Activated CD4-positive, alpha-beta T cell treated with anti-CD3 and anti-CD28 coated beads for 36 hours (primary cell): ENCODE measurements at regions of chr3 and their contacts with region 1.

Region 1: DNA sequence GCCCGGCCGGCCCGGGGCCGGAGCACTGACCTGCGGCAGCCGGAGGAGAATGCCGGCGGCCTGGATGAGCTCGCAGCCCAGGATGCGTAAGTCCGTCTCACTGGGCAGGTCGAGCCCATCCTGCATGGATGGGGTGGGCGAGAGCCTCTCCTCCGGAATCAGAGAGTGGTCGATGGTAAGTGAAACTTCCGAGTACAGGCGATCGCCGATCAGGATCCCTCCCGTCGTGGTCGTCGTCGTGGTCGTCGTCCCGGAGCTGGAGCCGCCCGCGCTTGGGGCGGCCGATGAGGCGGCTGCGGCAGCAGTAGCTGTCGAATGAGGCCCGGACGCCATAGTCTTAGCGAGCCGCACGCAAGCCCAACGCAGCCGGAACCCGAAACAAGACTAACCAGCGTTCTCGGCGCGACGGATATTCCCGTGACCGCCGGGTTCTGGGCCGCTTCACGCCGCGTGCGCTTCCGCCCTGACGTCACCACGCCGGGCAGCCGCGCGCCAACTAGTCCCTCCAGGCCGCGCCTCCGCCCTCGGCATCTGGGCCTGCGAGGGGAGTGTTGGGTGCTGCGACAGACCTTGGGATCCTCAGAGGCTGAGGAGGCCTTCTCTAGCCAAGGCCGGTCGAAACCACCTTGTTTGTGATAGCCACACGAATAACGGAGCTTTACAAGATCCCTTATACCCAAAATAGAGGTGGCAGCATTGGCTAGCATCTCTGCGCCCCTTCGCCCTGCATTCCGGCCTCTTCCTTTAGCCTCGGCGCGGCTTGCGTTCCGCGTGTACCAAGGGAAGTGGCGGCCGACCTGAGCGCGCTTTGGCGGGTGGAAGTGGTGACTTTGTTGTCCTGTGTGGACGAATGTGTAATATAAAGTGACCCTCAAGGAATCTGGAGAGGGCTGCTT is at the start of gene CCNL1:
- DNase-seq: peak; percentile 97
- ATAC-seq: peak; percentile 79
- H3K4me3 Mint-ChIP-seq: peak within 1 kb of the TSS; percentile 84
- H3K27ac Mint-ChIP-seq: peak within 1 kb of the TSS; percentile 97
- H3K4me1 Mint-ChIP-seq: peaks cover 37% of the 10 kb centered on the region
- H3K27me3 Mint-ChIP-seq: no peaks in the 10 kb centered on the region
- total RNA-seq, gene CCNL1: 163 to 215 TPM

Region 2: DNA sequence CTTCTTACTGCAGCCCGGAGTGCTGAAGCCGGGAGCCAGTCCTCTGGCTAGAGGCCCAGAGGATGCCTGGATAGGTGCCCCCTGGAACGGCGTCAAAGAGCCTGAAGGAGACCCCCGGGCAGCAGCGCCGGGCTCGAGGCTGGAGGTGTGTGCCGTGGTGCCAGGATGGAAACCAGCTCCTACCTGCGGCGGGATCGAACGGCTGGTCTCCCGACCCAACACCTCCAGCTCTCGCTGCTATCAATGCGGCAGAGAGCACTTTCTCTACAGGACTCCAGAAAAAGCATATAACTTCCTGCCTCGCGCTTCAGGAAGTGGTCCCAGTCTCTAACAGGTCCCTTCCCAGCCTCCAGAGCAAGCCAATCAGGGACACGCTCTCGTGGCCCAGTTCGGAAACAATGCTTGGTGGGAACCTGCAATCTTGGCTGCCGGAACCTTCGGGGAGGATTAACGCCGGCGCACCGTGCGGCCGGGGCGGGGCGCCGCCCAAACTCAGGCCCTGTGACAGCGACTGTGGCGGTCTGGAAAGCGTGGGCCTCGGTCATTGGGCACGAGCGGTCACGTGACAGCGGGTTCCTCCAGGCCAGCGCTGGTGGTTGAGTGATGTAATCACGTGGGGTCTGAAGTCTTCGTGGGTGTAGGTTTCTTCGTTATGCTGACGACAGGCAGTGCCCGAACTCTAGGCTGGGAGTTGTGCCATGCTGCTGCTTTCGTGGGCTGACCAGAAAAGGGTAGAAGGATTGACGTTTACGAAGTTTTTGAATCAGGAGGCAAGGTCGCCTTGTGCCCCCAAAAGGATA is 1305.7 kb before region 1 on chr3 and contains the start of gene SLC33A1:
- CTCF ChIA-PET with region 1: no interaction called
- POLR2A ChIA-PET with region 1: no interaction called
- intact Hi-C with region 1: loop called (anchors 1 to 10 kb)
- DNase-seq: peak; percentile 99
- ATAC-seq: peak; percentile 94
- H3K4me3 Mint-ChIP-seq: peak within 1 kb of the TSS; percentile 99
- H3K27ac Mint-ChIP-seq: peak within 1 kb of the TSS; percentile 99
- H3K4me1 Mint-ChIP-seq: peaks cover 33% of the 10 kb centered on the region
- H3K27me3 Mint-ChIP-seq: no peaks in the 10 kb centered on the region
- total RNA-seq, gene SLC33A1: 19.2 to 19.9 TPM

Region 3: GRCh38 chr3:156554842-156555687 is 604.9 kb before region 1 on chr3 and contains the start of gene SSR3:
- CTCF ChIA-PET with region 1: no interaction called
- POLR2A ChIA-PET with region 1: interaction called, 4 read pairs
- intact Hi-C with region 1: loop called (anchors 1 kb)
- DNase-seq: peak; percentile 100
- ATAC-seq: peak; percentile 99
- H3K4me3 Mint-ChIP-seq: peak within 1 kb of the TSS; percentile 92
- H3K27ac Mint-ChIP-seq: peak within 1 kb of the TSS; percentile 93
- H3K4me1 Mint-ChIP-seq: peaks cover 47% of the 10 kb centered on the region
- H3K27me3 Mint-ChIP-seq: no peaks in the 10 kb centered on the region
- total RNA-seq, gene SSR3: 144 to 156 TPM

Region 4: GRCh38 chr3:157088601-157089454 is 71.2 kb before region 1 on chr3:
- CTCF ChIA-PET with region 1: interaction called, 3 read pairs
- POLR2A ChIA-PET with region 1: interaction called, 10 read pairs
- intact Hi-C with region 1: loop called (anchors 1 kb)
- DNase-seq: peak; percentile 97
- ATAC-seq: peak; percentile 79
- H3K4me3 Mint-ChIP-seq: peak overlapping the region; percentile 72
- H3K27ac Mint-ChIP-seq: peak overlapping the region; percentile 97
- H3K4me1 Mint-ChIP-seq: peaks cover 71% of the 10 kb centered on the region
- H3K27me3 Mint-ChIP-seq: peaks cover 1% of the 10 kb centered on the region

Region 5: DNA sequence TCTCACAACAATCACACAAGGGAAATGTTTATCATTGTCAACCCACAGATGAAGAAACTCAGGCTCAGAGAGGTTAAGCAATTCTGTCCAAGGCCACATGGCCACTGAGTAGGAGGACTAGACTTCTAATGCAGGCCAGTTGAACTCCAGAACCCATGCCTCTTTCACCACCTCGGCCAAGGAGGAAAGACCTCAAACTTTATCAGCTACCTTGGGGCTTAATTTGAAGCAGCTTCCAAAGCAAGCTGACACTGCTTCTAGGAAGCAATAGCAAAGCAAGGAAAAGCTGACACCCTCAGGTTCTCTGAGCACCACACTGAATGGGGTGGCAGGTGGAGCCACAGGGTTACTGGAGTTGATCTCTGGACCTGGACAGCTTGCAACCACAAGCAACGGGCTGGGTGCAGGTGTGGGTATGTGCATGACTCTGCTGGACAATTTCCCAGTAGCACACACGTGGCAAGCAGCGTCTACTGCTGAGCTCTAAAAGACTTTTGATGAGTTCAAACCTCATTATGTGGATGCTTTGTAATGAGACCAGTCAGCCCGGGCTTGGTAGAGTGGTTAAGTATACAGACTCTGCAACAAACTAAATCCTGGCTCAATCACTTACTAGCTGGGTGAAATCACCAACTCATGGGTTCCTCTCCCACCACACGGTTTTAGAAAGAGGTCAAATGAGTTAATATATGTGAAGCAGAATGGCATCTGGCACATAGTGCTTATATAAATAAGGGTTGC is 23.2 kb before region 1 on chr3:
- CTCF ChIA-PET with region 1: interaction called, 13 read pairs
- POLR2A ChIA-PET with region 1: no interaction called
- intact Hi-C with region 1: loop called in 1 of 2 experiments (anchors 2 kb)
- DNase-seq: no peak
- ATAC-seq: no peak
- H3K4me3 Mint-ChIP-seq: no peak overlapping the region
- H3K27ac Mint-ChIP-seq: peak overlapping the region; percentile 39
- H3K4me1 Mint-ChIP-seq: peaks cover 33% of the 10 kb centered on the region
- H3K27me3 Mint-ChIP-seq: no peaks in the 10 kb centered on the region

Region 6: GRCh38 chr3:157148196-157148889 is 11.7 kb before region 1 on chr3:
- CTCF ChIA-PET with region 1: interaction called, 6 read pairs
- POLR2A ChIA-PET with region 1: interaction called, 34 read pairs
- intact Hi-C with region 1: loop called (anchors 1 kb)
- DNase-seq: peak; percentile 43
- ATAC-seq: peak; percentile 74
- H3K4me3 Mint-ChIP-seq: peak overlapping the region; percentile 27
- H3K27ac Mint-ChIP-seq: peak overlapping the region; percentile 74
- H3K4me1 Mint-ChIP-seq: peaks cover 45% of the 10 kb centered on the region
- H3K27me3 Mint-ChIP-seq: no peaks in the 10 kb centered on the region

Region 7: GRCh38 chr3:157201648-157202278 is 41.8 kb after region 1 on chr3:
- CTCF ChIA-PET with region 1: interaction called, 5 read pairs
- POLR2A ChIA-PET with region 1: interaction called, 3 read pairs
- intact Hi-C with region 1: loop called in 1 of 2 experiments (anchors 2 kb)
- DNase-seq: no peak
- ATAC-seq: no peak
- H3K4me3 Mint-ChIP-seq: no peak overlapping the region
- H3K27ac Mint-ChIP-seq: no peak overlapping the region
- H3K4me1 Mint-ChIP-seq: no peaks in the 10 kb centered on the region
- H3K27me3 Mint-ChIP-seq: no peaks in the 10 kb centered on the region

Region 8: GRCh38 chr3:157631478-157631877 is 471.5 kb after region 1 on chr3:
- CTCF ChIA-PET with region 1: no interaction called
- POLR2A ChIA-PET with region 1: no interaction called
- intact Hi-C with region 1: no loop called
- DNase-seq: no peak
- ATAC-seq: no peak
- H3K4me3 Mint-ChIP-seq: no peak overlapping the region
- H3K27ac Mint-ChIP-seq: no peak overlapping the region
- H3K4me1 Mint-ChIP-seq: no peaks in the 10 kb centered on the region
- H3K27me3 Mint-ChIP-seq: peaks cover 19% of the 10 kb centered on the region